ENCODE measurements at regions of chr14 and their contacts with region 1.

Region 1: GRCh38 chr14:20305265-20306078 is at the start of gene TTC5:
- DNase-seq: peak; percentile 85
- CTCF ChIP-seq: peak; percentile 94

Region 2: GRCh38 chr14:20295067-20295466 is 10.4 kb before region 1 on chr14:
- CTCF ChIA-PET with region 1: interaction called, 13 read pairs
- POLR2A ChIA-PET with region 1: no interaction called
- DNase-seq: peak; percentile 23
- CTCF ChIP-seq: no peak